ENCODE measurements at regions of chrX and their contacts with region 1.

Region 1: DNA sequence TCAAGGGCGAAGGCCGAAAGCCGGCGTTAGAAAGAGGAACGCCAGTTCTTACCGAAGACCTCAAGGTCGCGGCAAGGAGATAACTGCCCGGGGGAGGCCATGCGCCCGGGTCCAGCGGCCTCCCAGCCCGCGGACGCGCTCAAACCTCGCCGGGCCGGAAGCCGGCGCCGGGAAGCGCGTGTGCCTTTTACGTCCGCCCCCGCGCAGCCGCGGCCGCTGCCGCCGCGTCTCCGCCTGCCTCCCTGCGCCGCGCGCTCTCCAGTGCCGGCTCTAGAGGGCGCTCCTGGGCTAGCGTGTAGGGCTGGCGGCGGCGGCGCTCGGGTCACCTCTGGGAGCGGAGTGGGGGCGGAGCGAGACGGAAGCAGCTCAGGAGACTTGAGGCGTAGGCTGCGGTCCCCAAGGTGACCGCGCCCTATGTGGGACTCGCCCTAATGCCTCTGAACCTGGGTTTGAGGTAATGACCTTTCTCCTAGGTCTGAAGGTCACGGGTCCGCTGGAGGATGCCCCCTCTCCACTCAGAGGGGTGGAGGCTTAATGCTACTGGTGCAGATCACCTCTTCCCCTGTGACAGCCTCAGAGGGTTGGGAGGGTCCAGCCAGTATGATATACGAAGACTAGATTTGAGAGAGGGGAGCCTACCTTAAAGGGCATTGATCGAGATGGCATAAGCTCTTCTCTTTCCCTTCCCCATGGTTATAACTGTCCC is 839 bp downstream of the SLC25A5 start:
- DNase-seq: peak; percentile 45
- ATAC-seq: peak; percentile 83
- H3K4me3 ChIP-seq: peak overlapping the region; percentile 64 to 84 (median 79); a peak in 5 of 6 replicates
- H3K27ac ChIP-seq: peak overlapping the region; percentile 91
- H3K4me1 ChIP-seq: peaks cover 29% of the 10 kb centered on the region
- H3K27me3 ChIP-seq: no peaks in the 10 kb centered on the region; a peak in 1 of 5 replicates
- CTCF ChIP-seq: peak; percentile 84
- EP300 ChIP-seq: no peak
- POLR2A ChIP-seq: no peak; a peak in 1 of 4 replicates
- RAD21 ChIP-seq: peak; percentile 77

Region 2: GRCh38 chrX:119251386-119251785 is 217.7 kb before region 1 on chrX:
- CTCF ChIA-PET with region 1: no interaction called
- POLR2A ChIA-PET with region 1: no interaction called
- in situ Hi-C with region 1: no loop called
- intact Hi-C with region 1: no loop called
- DNase-seq: no peak
- ATAC-seq: no peak
- H3K4me3 ChIP-seq: no peak overlapping the region
- H3K27ac ChIP-seq: no peak overlapping the region
- H3K4me1 ChIP-seq: no peaks in the 10 kb centered on the region
- H3K27me3 ChIP-seq: no peaks in the 10 kb centered on the region
- CTCF ChIP-seq: no peak
- EP300 ChIP-seq: no peak
- POLR2A ChIP-seq: no peak
- RAD21 ChIP-seq: no peak

Region 3: GRCh38 chrX:119417844-119418243 is 51.2 kb before region 1 on chrX:
- CTCF ChIA-PET with region 1: no interaction called
- POLR2A ChIA-PET with region 1: interaction called, 4 read pairs
- in situ Hi-C with region 1: no loop called
- intact Hi-C with region 1: loop called (anchors 2 kb)
- DNase-seq: peak; percentile 21
- ATAC-seq: peak; percentile 73
- H3K4me3 ChIP-seq: no peak overlapping the region
- H3K27ac ChIP-seq: no peak overlapping the region
- H3K4me1 ChIP-seq: peaks cover 28% of the 10 kb centered on the region
- H3K27me3 ChIP-seq: no peaks in the 10 kb centered on the region
- CTCF ChIP-seq: peak; percentile 57
- EP300 ChIP-seq: no peak
- POLR2A ChIP-seq: no peak
- RAD21 ChIP-seq: no peak

Region 4: GRCh38 chrX:119455264-119455663 is 13.8 kb before region 1 on chrX:
- CTCF ChIA-PET with region 1: no interaction called
- POLR2A ChIA-PET with region 1: interaction called, 12 read pairs
- in situ Hi-C with region 1: no loop called
- intact Hi-C with region 1: no loop called
- DNase-seq: no peak
- ATAC-seq: no peak
- H3K4me3 ChIP-seq: no peak overlapping the region
- H3K27ac ChIP-seq: no peak overlapping the region
- H3K4me1 ChIP-seq: peaks cover 11% of the 10 kb centered on the region
- H3K27me3 ChIP-seq: no peaks in the 10 kb centered on the region
- CTCF ChIP-seq: no peak
- EP300 ChIP-seq: no peak
- POLR2A ChIP-seq: no peak
- RAD21 ChIP-seq: no peak

Region 5: GRCh38 chrX:119495734-119496726 is 26.9 kb after region 1 on chrX:
- CTCF ChIA-PET with region 1: no interaction called
- POLR2A ChIA-PET with region 1: interaction called, 11 read pairs
- in situ Hi-C with region 1: no loop called
- intact Hi-C with region 1: no loop called
- DNase-seq: peak; percentile 75
- ATAC-seq: peak; percentile 96
- H3K4me3 ChIP-seq: peak overlapping the region in 2 of 3 experiments; percentile 24 to 46; a peak in 2 of 6 replicates
- H3K27ac ChIP-seq: peak overlapping the region; percentile 93
- H3K4me1 ChIP-seq: peaks cover 45% of the 10 kb centered on the region
- H3K27me3 ChIP-seq: no peaks in the 10 kb centered on the region
- CTCF ChIP-seq: peak; percentile 40
- EP300 ChIP-seq: peak in 1 of 2 experiments; percentile 67; a peak in 1 of 4 replicates
- POLR2A ChIP-seq: peak in 1 of 2 experiments; percentile 25; a peak in 1 of 4 replicates
- RAD21 ChIP-seq: no peak